Activated CD4-positive, alpha-beta memory T cell treated with anti-CD3 and anti-CD28 coated beads for 36 hours (primary cell): ENCODE measurements at regions of chr6 and their contacts with region 1.

Region 1: GRCh38 chr6:53544470-53545308 is at the start of gene GCLC:
- DNase-seq: peak; percentile 94
- H3K4me3 Mint-ChIP-seq: peak within 1 kb of the TSS; percentile 94
- H3K27ac Mint-ChIP-seq: peak within 1 kb of the TSS; percentile 86
- H3K4me1 Mint-ChIP-seq: peaks cover 62% of the 10 kb centered on the region
- H3K27me3 Mint-ChIP-seq: no peaks in the 10 kb centered on the region
- total RNA-seq, gene GCLC: 27.2 to 33.3 TPM

Region 2: GRCh38 chr6:52647199-52647598 is 897.5 kb before region 1 on chr6:
- CTCF ChIA-PET with region 1: no interaction called
- POLR2A ChIA-PET with region 1: no interaction called
- intact Hi-C with region 1: no loop called
- DNase-seq: peak; percentile 21
- H3K4me3 Mint-ChIP-seq: no peak overlapping the region
- H3K27ac Mint-ChIP-seq: no peak overlapping the region
- H3K4me1 Mint-ChIP-seq: peaks cover 8% of the 10 kb centered on the region
- H3K27me3 Mint-ChIP-seq: peaks cover 13% of the 10 kb centered on the region

Region 3: DNA sequence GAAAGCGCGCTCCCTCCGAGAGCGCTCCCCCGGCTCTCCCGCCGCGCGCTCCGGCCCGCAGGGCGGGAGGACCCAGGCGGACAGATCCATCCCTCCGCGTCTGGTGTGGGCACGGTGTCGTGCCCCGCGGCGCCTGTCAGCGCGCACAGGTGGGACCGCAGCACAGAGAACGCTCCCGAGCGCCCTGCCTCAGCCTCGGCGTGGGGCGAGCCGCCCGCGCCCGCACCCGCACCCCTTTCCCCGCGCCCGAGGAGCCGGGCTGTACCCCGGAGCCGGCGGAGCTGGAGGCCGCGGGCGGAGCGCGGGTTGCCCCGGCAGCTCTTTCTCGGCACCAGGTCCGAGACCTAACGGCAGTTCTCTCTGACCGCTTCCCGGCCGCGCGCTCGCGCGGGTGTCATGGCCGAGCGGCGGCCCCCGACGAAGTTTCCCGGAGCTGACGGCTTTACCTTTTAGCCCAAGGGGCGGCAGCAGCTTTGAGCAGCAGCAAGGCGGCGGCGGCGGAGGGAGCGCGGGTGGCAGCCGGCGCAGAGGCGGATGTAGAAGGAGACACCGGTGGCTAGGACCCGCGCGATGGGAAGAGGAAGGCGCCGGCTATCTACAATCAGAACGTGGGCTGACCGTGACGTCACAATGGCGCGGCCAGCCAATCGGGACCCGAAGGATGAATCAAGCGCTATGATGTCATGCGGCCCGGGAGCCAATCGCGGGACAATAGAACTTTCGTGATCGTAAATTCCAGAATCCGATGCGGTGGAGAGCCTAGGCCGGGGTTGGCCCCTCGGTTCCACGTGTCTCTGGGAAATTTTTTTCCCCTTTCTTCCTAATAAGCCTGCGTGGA is 196.1 kb before region 1 on chr6 and contains the start of gene ELOVL5:
- CTCF ChIA-PET with region 1: no interaction called
- POLR2A ChIA-PET with region 1: no interaction called
- intact Hi-C with region 1: loop called (anchors 5 kb)
- DNase-seq: peak; percentile 98
- H3K4me3 Mint-ChIP-seq: peak within 1 kb of the TSS; percentile 93
- H3K27ac Mint-ChIP-seq: peak within 1 kb of the TSS; percentile 95
- H3K4me1 Mint-ChIP-seq: peaks cover 43% of the 10 kb centered on the region
- H3K27me3 Mint-ChIP-seq: no peaks in the 10 kb centered on the region
- total RNA-seq, gene ELOVL5: 112 to 121 TPM

Region 4: GRCh38 chr6:53426667-53427270 is 117.9 kb before region 1 on chr6:
- CTCF ChIA-PET with region 1: interaction called, 3 read pairs
- POLR2A ChIA-PET with region 1: no interaction called
- intact Hi-C with region 1: loop called (anchors 1 kb)
- DNase-seq: no peak
- H3K4me3 Mint-ChIP-seq: no peak overlapping the region
- H3K27ac Mint-ChIP-seq: no peak overlapping the region
- H3K4me1 Mint-ChIP-seq: peaks cover 30% of the 10 kb centered on the region
- H3K27me3 Mint-ChIP-seq: peaks cover 11% of the 10 kb centered on the region

Region 5: DNA sequence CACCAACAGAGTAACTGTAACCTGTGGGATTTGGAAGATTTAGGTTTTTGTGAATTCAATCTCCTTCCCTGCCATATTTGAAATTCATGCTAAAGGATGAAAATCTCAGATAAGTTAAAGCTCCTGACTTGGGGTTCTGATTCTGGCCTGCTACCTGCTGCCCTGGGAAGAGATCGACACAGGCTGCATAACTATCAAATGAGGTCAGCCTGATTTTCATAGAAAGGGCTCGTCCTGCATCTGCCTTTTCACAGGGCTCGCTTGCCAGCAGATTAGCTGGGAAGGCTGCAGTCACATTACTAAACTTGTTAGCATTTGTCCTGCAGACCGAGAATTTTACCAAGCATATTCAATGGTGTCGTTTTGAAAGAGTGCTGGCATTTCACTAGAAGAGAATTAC is 14.3 kb before region 1 on chr6:
- CTCF ChIA-PET with region 1: no interaction called
- POLR2A ChIA-PET with region 1: no interaction called
- intact Hi-C with region 1: no loop called
- DNase-seq: no peak
- H3K4me3 Mint-ChIP-seq: no peak overlapping the region
- H3K27ac Mint-ChIP-seq: no peak overlapping the region
- H3K4me1 Mint-ChIP-seq: peaks cover 37% of the 10 kb centered on the region
- H3K27me3 Mint-ChIP-seq: no peaks in the 10 kb centered on the region

Region 6: GRCh38 chr6:53593001-53593488 is 48.4 kb after region 1 on chr6:
- CTCF ChIA-PET with region 1: no interaction called
- POLR2A ChIA-PET with region 1: no interaction called
- intact Hi-C with region 1: loop called (anchors 2 kb)
- DNase-seq: no peak
- H3K4me3 Mint-ChIP-seq: no peak overlapping the region
- H3K27ac Mint-ChIP-seq: peak overlapping the region; percentile 10
- H3K4me1 Mint-ChIP-seq: peaks cover 10% of the 10 kb centered on the region
- H3K27me3 Mint-ChIP-seq: peaks cover 9% of the 10 kb centered on the region

Region 7: GRCh38 chr6:53701333-53702218 is 156.9 kb after region 1 on chr6:
- CTCF ChIA-PET with region 1: no interaction called
- POLR2A ChIA-PET with region 1: no interaction called
- intact Hi-C with region 1: loop called (anchors 5 kb)
- DNase-seq: peak; percentile 44
- H3K4me3 Mint-ChIP-seq: no peak overlapping the region
- H3K27ac Mint-ChIP-seq: peak overlapping the region; percentile 9
- H3K4me1 Mint-ChIP-seq: peaks cover 10% of the 10 kb centered on the region
- H3K27me3 Mint-ChIP-seq: peaks cover 2% of the 10 kb centered on the region

Region 8: GRCh38 chr6:53794720-53795253 is 250.1 kb after region 1 on chr6 and contains the start of gene LRRC1:
- CTCF ChIA-PET with region 1: interaction called, 4 read pairs
- POLR2A ChIA-PET with region 1: no interaction called
- intact Hi-C with region 1: loop called (anchors 1 kb)
- DNase-seq: peak; percentile 90
- H3K4me3 Mint-ChIP-seq: peak within 1 kb of the TSS; percentile 97
- H3K27ac Mint-ChIP-seq: peak within 1 kb of the TSS; percentile 76
- H3K4me1 Mint-ChIP-seq: peaks cover 24% of the 10 kb centered on the region
- H3K27me3 Mint-ChIP-seq: peaks cover 9% of the 10 kb centered on the region
- total RNA-seq, gene LRRC1: 3.2 TPM